ENCODE measurements at regions of chr18 and their contacts with region 1.

Region 1: GRCh38 chr18:48445540-48445939 is 36.4 kb upstream of the ZBTB7C start:
- DNase-seq: peak; percentile 25 to 76 (median 54)
- ATAC-seq: peak; percentile 66 to 78 (median 76)
- H3K4me3 ChIP-seq: no peak overlapping the region
- H3K4me3 Mint-ChIP-seq: no peak overlapping the region
- H3K27ac ChIP-seq: no peak overlapping the region
- H3K27ac Mint-ChIP-seq: no peak overlapping the region
- H3K4me1 ChIP-seq: peaks cover 0 to 9% of the 10 kb centered on the region in 2 experiments
- H3K4me1 Mint-ChIP-seq: peaks cover 8 to 16% (median 11%) of the 10 kb centered on the region in 3 donors
- H3K27me3 ChIP-seq: peaks cover 5 to 29% of the 10 kb centered on the region in 2 experiments
- H3K27me3 Mint-ChIP-seq: peaks cover 39 to 51% of the 10 kb centered on the region in 2 donors

Region 2: GRCh38 chr18:48455555-48456478 is 10.3 kb after region 1 on chr18:
- CTCF ChIA-PET with region 1: interaction called, 8 to 10 read pairs
- POLR2A ChIA-PET with region 1: no interaction called
- DNase-seq: peak in 34 of 35 experiments; percentile 13 to 66 (median 38)
- ATAC-seq: peak; percentile 75 to 85 (median 85)
- H3K4me3 ChIP-seq: peak overlapping the region in 1 of 2 donors; percentile 19
- H3K4me3 Mint-ChIP-seq: peak overlapping the region in 2 of 3 donors; percentile 22 to 48
- H3K27ac ChIP-seq: no peak overlapping the region
- H3K27ac Mint-ChIP-seq: peak overlapping the region; percentile 19 to 28
- H3K4me1 ChIP-seq: peaks cover 8 to 33% of the 10 kb centered on the region in 2 experiments
- H3K4me1 Mint-ChIP-seq: peaks cover 39 to 44% (median 43%) of the 10 kb centered on the region in 3 donors
- H3K27me3 ChIP-seq: peaks cover 9 to 55% of the 10 kb centered on the region in 2 experiments
- H3K27me3 Mint-ChIP-seq: peaks cover 41 to 48% of the 10 kb centered on the region in 2 donors

Region 3: GRCh38 chr18:48486754-48487153 is 41.2 kb after region 1 on chr18:
- CTCF ChIA-PET with region 1: no interaction called
- POLR2A ChIA-PET with region 1: no interaction called
- DNase-seq: no peak
- ATAC-seq: no peak
- H3K4me3 ChIP-seq: no peak overlapping the region
- H3K4me3 Mint-ChIP-seq: no peak overlapping the region
- H3K27ac ChIP-seq: no peak overlapping the region
- H3K27ac Mint-ChIP-seq: no peak overlapping the region
- H3K4me1 ChIP-seq: no peaks in the 10 kb centered on the region
- H3K4me1 Mint-ChIP-seq: no peaks in the 10 kb centered on the region
- H3K27me3 ChIP-seq: peaks cover 2 to 5% of the 10 kb centered on the region in 2 experiments
- H3K27me3 Mint-ChIP-seq: peaks cover 18 to 38% of the 10 kb centered on the region in 2 donors

Measured in T-cell (primary cell).